ENCODE measurements at regions of chr14 and their contacts with region 1.

Region 1: DNA sequence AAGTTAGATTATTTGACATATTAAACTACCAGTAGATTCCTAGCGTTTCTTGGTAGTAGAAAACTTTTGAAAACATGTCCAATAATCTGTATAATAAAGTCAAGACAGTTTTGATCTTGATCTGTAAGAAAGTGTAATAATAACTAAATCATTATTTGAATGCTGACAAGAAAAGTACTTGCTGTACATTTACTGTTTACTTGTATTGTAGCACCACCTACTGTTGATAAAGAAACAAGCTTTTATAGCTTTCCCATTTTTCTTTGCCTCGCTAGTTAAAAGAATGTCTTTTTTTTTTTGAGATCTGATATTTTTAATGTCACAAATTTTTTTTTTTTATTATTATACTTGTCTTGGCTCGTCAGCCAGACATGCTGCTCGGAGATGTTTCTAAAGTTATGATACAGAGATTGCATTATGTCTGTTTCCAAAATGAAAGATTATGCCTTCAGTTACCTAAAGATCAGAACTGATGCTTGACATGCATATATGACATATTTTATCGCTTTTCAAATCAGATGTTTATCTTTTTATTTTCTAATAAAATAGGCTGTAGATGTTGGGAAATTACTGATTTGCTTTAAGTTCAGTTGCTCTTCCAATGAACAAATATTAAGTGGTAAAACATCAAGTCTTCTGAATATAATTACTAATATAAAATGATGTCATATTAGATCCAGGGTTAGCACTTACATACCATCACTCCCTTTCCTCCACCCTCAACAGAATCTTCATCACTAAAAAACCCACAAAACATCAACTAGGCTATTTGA is 140.5 kb downstream of the AKAP6 start:
- DNase-seq: no peak
- H3K4me3 ChIP-seq: no peak overlapping the region
- H3K27ac ChIP-seq: peak overlapping the region; percentile 84
- H3K4me1 ChIP-seq: peaks cover 69% of the 10 kb centered on the region
- H3K27me3 ChIP-seq: no peaks in the 10 kb centered on the region
- CTCF ChIP-seq: peak; percentile 62

Region 2: GRCh38 chr14:31251028-31251958 is 1218.3 kb before region 1 on chr14:
- intact Hi-C with region 1: no loop called
- DNase-seq: no peak
- H3K4me3 ChIP-seq: no peak overlapping the region
- H3K27ac ChIP-seq: no peak overlapping the region
- H3K4me1 ChIP-seq: no peaks in the 10 kb centered on the region
- H3K27me3 ChIP-seq: no peaks in the 10 kb centered on the region
- CTCF ChIP-seq: no peak

Region 3: DNA sequence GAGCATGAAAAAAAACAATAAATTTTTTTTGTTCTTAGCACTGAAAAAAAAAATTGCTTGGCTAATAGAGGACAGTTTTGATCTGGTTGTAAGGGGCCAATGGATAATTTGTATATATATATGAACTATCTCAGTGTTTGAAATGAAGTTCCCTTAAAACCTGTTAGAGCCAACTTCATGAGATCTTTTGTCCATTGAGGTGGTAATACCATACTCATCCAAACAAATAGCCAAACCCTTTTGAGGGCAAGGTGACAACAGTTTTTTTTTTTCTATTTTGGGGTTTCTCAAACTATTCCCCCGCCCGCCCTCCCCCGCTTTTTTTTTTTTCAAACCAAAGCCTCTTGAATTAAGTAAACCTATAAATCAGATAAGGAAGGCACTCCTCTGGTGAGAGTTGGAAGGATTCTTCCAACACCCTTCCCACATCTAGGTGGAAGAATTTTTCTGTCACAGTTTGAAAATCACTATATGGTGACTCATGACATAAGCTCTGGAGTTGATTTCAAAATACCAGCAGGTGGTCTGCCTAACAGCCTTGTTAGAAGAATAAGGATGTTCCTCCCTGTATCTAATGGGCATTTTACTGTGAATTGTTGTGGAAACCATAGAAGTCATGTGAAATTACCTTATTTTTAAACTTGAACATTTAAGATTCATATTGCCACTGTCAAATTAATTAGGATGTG is 382.3 kb before region 1 on chr14:
- intact Hi-C with region 1: loop called (anchors 10 kb)
- DNase-seq: no peak
- H3K4me3 ChIP-seq: no peak overlapping the region
- H3K27ac ChIP-seq: no peak overlapping the region
- H3K4me1 ChIP-seq: peaks cover 74% of the 10 kb centered on the region
- H3K27me3 ChIP-seq: no peaks in the 10 kb centered on the region
- CTCF ChIP-seq: no peak

Region 4: DNA sequence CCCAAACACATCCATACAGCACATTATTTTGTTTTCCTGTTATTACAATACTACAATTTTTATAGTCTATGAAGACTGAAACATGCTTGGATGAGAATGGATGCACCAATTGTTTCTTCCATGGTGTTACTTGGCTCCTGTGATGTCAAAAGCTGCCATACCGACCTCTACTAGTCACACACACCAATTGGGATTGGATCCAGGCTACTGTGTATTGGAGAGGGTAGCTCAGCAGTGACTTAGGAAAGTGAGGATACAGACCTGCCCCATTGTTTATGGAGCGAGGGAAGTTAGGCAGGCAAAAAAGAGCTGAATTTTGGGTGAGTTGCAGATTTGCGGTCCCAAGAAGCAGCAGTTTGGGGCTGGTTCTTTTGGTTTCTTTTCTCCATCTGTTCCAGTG is 171.2 kb before region 1 on chr14:
- intact Hi-C with region 1: no loop called
- DNase-seq: no peak
- H3K4me3 ChIP-seq: no peak overlapping the region
- H3K27ac ChIP-seq: no peak overlapping the region
- H3K4me1 ChIP-seq: peaks cover 20% of the 10 kb centered on the region
- H3K27me3 ChIP-seq: no peaks in the 10 kb centered on the region
- CTCF ChIP-seq: no peak